Esophagus squamous epithelium (tissue), 5 donors: ENCODE measurements at regions of chr19 and their contacts with region 1.

Region 1: DNA sequence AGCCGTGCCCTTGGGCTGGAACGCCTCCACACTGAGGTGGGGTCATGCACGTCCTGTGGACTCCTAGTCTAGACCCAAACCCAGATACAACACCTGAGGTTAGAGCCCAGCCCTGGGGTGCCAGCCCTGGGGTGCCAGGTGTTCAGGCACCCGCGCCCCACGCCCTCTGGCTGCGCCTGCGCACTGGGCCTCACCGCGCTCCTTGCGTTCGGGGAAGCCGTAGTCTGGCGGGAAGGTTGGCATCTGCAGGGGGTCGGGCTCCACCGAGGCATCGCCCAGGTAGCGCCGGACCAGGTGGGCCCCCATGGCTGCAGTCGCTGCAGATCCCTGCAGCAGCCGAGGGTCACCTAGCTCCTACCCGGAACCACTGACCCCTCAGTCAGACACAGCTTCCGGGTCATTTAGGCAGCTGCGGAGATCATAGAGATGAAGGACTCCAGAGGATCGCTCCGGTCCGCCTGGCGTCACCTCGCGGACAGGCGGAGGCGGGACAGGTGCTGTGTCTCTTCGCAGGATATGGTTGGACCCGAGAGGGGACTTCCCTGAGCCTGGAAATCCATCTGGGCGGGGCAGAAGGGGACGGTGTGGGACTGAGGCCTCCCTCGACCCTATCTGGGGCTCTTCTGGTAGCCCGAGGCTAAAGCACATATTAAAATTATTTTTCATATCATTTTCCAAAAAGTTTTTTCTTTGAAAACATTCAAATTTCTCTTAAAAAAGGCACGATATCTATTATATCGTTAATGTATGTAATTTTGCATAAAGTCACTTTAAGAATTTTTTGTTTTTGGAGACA is at the start of gene NDUFB7:
- DNase-seq: peak; percentile 67
- H3K4me3 ChIP-seq: peak within 1 kb of the TSS; percentile 82 to 99 (median 90)
- H3K27ac ChIP-seq: peak within 1 kb of the TSS; percentile 85 to 94 (median 91)
- H3K4me1 ChIP-seq: peaks cover 18 to 65% (median 25%) of the 10 kb centered on the region in 3 donors
- H3K27me3 ChIP-seq: no peaks in the 10 kb centered on the region
- CTCF ChIP-seq: peak; percentile 56 to 86 (median 64)
- POLR2A ChIP-seq: peak in 3 of 4 donors; percentile 9 to 64 (median 45)
- total RNA-seq, gene NDUFB7: 262 to 379 (median 295) TPM

Region 2: GRCh38 chr19:14517840-14518505 is 53.9 kb before region 1 on chr19 and contains the start of gene DNAJB1:
- intact Hi-C with region 1: no loop called
- DNase-seq: no peak
- H3K4me3 ChIP-seq: peak within 1 kb of the TSS; percentile 66 to 99 (median 96)
- H3K27ac ChIP-seq: peak within 1 kb of the TSS; percentile 99 to 100 (median 100)
- H3K4me1 ChIP-seq: peaks cover 24 to 87% (median 50%) of the 10 kb centered on the region in 3 donors
- H3K27me3 ChIP-seq: no peaks in the 10 kb centered on the region
- CTCF ChIP-seq: peak in 1 of 6 experiments; percentile 19
- POLR2A ChIP-seq: peak in 3 of 4 donors; percentile 96 to 98 (median 98)
- total RNA-seq, gene DNAJB1: 182 to 294 (median 224) TPM

Region 3: GRCh38 chr19:14689598-14690503 is 118.0 kb after region 1 on chr19 and contains the start of gene ZNF333:
- intact Hi-C with region 1: loop called (anchors 5 kb)
- DNase-seq: peak; percentile 81
- H3K4me3 ChIP-seq: peak within 1 kb of the TSS; percentile 50 to 88 (median 62)
- H3K27ac ChIP-seq: peak within 1 kb of the TSS; percentile 93 to 97 (median 94)
- H3K4me1 ChIP-seq: peaks cover 0 to 29% (median 8%) of the 10 kb centered on the region in 3 donors
- H3K27me3 ChIP-seq: no peaks in the 10 kb centered on the region
- CTCF ChIP-seq: peak in 1 of 6 experiments; percentile 21
- POLR2A ChIP-seq: peak in 2 of 4 donors; percentile 57 to 62
- total RNA-seq, gene ZNF333: 1.1 to 20.2 (median 3.9) TPM

Region 4: DNA sequence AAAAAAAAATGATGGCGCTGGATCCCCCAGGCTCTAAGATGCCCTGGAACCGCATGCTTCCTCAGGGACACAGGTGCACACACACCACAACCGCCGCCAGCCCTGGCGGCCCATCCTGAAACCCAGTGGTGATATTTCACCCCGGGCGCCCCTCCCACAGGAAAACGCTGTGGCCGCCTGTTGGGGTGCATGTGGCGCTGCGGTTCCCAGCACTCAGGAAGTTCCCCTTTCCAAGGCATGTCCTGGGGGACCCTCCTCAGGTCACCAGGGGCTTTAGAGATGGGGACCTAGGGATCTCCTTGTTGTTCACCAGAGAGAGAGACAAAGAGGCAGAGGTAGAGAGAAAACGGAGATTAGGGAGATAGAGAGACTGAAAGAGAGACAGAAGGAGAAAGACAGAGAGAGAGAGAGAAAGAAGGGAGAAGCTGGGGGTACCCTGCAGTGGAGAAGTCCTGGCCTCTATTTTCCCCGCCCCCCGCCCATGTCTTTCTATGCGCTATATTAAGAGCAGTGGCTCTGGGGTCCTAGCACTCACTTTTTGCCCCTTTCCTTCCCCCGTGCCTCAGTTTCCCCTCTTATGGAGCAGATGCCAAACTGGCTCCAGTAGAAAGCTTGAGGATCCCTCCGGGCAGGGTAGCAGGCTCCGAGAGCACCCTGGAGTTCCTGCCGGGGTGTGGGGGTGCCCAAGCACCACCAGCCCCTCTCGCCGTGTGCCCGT is 204.1 kb after region 1 on chr19:
- intact Hi-C with region 1: loop called (anchors 10 kb)
- DNase-seq: no peak
- H3K4me3 ChIP-seq: peak overlapping the region; percentile 27 to 60 (median 40)
- H3K27ac ChIP-seq: peak overlapping the region in 3 of 4 donors; percentile 34 to 44 (median 42)
- H3K4me1 ChIP-seq: peaks cover 3 to 20% (median 3%) of the 10 kb centered on the region in 3 donors
- H3K27me3 ChIP-seq: peaks cover 0 to 67% (median 0%) of the 10 kb centered on the region in 4 donors
- CTCF ChIP-seq: no peak
- POLR2A ChIP-seq: no peak

Region 5: DNA sequence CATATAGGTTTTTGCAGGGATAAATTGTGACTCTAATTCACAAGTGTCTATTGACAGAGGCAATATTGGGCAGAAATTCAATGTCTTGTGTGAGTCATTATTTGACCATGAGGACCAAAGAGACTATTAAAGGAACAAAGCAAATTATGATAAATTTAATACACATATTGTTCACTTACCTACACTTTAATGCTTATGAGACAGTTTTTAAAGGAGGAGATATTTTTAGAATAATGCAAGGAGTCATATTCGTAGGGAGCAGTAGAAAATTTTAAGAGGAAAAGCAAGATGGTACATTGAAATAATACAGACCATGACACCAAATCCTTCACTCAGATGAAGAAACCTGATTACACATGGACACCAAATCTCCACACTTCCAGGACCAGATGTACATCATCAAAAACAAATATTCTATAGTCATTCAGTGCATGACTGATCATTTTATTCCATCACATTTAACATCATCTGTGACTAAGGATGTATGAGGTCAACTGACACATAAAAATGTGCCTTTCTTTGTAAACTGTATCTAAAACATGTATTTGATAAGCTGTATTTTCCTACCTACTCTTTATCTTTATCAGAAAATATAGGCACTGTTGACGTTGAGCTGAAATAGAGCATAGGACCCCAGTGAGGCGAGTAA is 318.2 kb after region 1 on chr19:
- intact Hi-C with region 1: loop called (anchors 10 kb)
- DNase-seq: no peak
- H3K4me3 ChIP-seq: no peak overlapping the region
- H3K27ac ChIP-seq: no peak overlapping the region
- H3K4me1 ChIP-seq: peaks cover 0 to 6% (median 5%) of the 10 kb centered on the region in 3 donors
- H3K27me3 ChIP-seq: peaks cover 0 to 30% (median 0%) of the 10 kb centered on the region in 4 donors
- CTCF ChIP-seq: no peak
- POLR2A ChIP-seq: no peak